Left colon (tissue), 2 donors: ENCODE measurements at regions of chr14 and their contacts with region 1.

Region 1: GRCh38 chr14:95534299-95535225 is at the start of gene GLRX5:
- DNase-seq: peak; percentile 97 to 99
- ATAC-seq: peak; percentile 91
- total RNA-seq, gene GLRX5: 47.4 to 56.4 TPM

Region 2: GRCh38 chr14:95452176-95452892 is 82.2 kb before region 1 on chr14:
- intact Hi-C with region 1: loop called in 1 of 2 experiments (anchors 5 kb)
- DNase-seq: no peak
- ATAC-seq: peak; percentile 44